Vagina (tissue), 2 donors: ENCODE measurements at regions of chr7 and their contacts with region 1.

Region 1: GRCh38 chr7:75872073-75872782 is 6.6 kb upstream of the RHBDD2 start:
- DNase-seq: no peak
- H3K4me3 ChIP-seq: no peak overlapping the region
- H3K27ac ChIP-seq: no peak overlapping the region
- H3K4me1 ChIP-seq: no peaks in the 10 kb centered on the region
- H3K27me3 ChIP-seq: no peaks in the 10 kb centered on the region
- CTCF ChIP-seq: no peak
- POLR2A ChIP-seq: no peak

Region 2: DNA sequence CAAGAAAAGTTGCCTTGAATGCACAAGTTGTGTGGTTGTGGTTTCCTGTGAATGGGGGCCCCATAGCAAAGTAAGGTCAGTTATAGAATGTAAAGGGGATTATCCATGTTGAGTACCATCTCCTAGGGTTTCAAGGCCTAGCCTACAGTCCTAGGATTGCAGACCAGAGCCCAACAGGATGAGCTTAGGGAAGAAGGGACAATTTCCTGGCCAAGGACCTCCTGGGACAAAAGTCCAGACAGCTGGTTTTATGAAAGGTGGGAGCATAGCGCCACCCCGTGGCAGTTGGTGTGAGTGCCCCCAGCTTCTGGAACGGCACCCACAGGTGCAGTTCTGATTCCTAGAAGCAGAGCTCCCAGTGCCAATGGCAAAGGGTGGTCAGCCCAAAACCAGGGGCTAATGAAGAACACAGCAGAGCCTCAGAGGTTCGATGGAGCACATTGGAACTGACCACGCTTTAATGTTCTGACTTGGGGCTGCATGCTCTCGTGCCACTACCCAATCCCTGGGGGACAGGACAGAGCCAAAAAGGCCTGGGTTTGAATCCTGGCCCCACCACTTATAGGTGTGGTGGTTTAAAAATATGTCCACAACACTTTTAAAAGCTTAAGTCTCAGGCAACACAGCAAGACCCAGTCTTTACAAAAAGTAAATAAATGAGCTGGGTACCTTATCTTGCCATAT is 147.9 kb after region 1 on chr7:
- intact Hi-C with region 1: loop called (anchors 5 kb)
- DNase-seq: no peak
- H3K4me3 ChIP-seq: no peak overlapping the region
- H3K27ac ChIP-seq: no peak overlapping the region
- H3K4me1 ChIP-seq: no peaks in the 10 kb centered on the region
- H3K27me3 ChIP-seq: no peaks in the 10 kb centered on the region
- CTCF ChIP-seq: peak; percentile 83 to 91 (median 89)
- POLR2A ChIP-seq: no peak

Region 3: GRCh38 chr7:77393269-77393668 is 1521.0 kb after region 1 on chr7:
- intact Hi-C with region 1: no loop called
- DNase-seq: no peak
- H3K4me3 ChIP-seq: no peak overlapping the region
- H3K27ac ChIP-seq: no peak overlapping the region
- H3K4me1 ChIP-seq: no peaks in the 10 kb centered on the region
- H3K27me3 ChIP-seq: no peaks in the 10 kb centered on the region
- CTCF ChIP-seq: no peak
- POLR2A ChIP-seq: no peak